WTC11 (cell line): ENCODE measurements at regions of chr20 and their contacts with region 1.

Region 1: GRCh38 chr20:57329608-57330221 is at the start of gene SPO11:
- DNase-seq: peak; percentile 76
- ATAC-seq: peak; percentile 88
- H3K4me3 Mint-ChIP-seq: no peak within 1 kb of the TSS
- H3K27ac Mint-ChIP-seq: no peak within 1 kb of the TSS
- H3K4me1 Mint-ChIP-seq: peaks cover 10% of the 10 kb centered on the region
- H3K27me3 Mint-ChIP-seq: no peaks in the 10 kb centered on the region
- CTCF ChIP-seq: peak; percentile 58
- total RNA-seq, gene SPO11: not detected in 3 replicates

Region 2: DNA sequence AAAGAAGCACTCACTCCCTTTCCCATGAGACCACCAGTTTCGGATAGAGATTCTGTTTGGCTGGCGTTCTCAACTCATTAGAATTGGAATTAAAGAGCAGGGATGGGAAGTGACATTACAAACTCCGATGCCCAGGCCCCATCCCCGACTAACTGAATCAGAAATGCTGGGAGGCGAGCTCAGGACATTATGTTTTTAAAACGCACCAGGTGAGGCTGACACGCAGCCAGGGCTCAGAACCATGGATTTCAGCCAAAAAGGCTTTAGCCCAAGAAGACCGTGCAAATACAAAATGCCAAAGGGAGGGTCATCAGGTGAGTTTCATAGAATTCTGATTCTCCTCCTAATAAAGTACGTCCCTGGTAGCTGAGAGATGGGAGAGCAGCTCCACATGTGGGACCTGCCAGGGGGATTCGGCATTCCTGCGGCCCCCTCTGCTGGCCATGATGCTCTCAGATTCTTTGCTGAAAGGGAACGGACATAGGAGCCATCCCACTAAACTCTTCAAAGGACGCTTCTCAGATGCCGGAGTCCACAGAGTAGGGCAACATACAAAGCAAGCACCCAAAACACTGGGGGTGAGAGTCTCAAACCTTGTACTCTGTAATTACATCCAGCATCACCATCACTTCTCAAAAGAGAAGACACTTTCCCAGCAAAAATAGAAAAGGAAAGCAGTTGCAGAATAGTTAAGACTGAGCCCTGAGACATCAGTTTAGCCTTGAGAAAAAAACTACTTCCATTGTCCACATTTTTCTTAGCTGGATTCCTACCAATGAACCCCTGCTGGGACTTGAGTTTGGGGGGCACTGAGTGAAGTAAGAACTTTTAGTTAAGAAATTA is 268.4 kb before region 1 on chr20:
- CTCF ChIA-PET with region 1: interaction called, 12 read pairs
- POLR2A ChIA-PET with region 1: no interaction called
- DNase-seq: peak; percentile 80
- ATAC-seq: peak; percentile 94
- H3K4me3 Mint-ChIP-seq: no peak overlapping the region
- H3K27ac Mint-ChIP-seq: no peak overlapping the region
- H3K4me1 Mint-ChIP-seq: peaks cover 9% of the 10 kb centered on the region
- H3K27me3 Mint-ChIP-seq: no peaks in the 10 kb centered on the region; the same call in 1 of the 2 replicates
- CTCF ChIP-seq: peak; percentile 22; the same call in 1 of the 2 replicates

Region 3: DNA sequence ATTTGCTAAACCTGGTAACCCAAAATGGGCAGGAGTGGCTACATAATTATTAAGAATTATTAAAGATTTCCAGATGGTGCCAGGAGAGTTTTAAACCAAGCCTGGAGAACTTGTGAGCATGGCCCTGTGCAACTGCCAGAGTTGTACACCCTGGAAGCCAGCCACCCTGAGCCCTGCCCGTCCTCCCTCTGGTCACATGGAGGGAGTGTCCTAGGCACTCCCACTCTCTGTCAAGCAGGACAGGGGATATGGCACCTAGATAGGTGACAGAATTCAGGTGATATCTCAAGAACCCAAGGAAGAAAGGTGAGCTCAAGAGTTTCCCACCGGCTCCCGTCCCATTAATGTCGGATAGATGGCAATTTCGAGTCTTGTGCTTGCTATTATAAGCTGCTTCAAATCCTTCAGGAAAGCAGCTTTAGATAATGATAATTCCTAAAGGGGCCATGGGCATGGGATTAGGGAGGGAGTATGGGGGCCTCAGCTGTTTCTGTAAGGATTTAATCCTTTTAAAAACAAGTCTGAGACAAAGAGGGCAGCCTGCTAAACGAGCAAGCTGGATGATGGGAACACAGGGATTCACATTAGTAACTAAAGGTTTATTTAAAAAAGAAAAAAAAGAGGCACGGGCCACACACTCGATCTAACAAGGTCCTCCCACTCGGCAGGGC is 232.3 kb before region 1 on chr20:
- CTCF ChIA-PET with region 1: interaction called, 239 read pairs
- POLR2A ChIA-PET with region 1: no interaction called
- DNase-seq: no peak
- ATAC-seq: no peak
- H3K4me3 Mint-ChIP-seq: no peak overlapping the region
- H3K27ac Mint-ChIP-seq: no peak overlapping the region
- H3K4me1 Mint-ChIP-seq: peaks cover 1% of the 10 kb centered on the region
- H3K27me3 Mint-ChIP-seq: peaks cover 3% of the 10 kb centered on the region
- CTCF ChIP-seq: no peak

Region 4: GRCh38 chr20:57211959-57212895 is 117.5 kb before region 1 on chr20:
- CTCF ChIA-PET with region 1: interaction called, 11 read pairs
- POLR2A ChIA-PET with region 1: no interaction called
- DNase-seq: peak; percentile 62
- ATAC-seq: peak; percentile 79
- H3K4me3 Mint-ChIP-seq: peak overlapping the region; percentile 10
- H3K27ac Mint-ChIP-seq: peak overlapping the region; percentile 59
- H3K4me1 Mint-ChIP-seq: peaks cover 28% of the 10 kb centered on the region
- H3K27me3 Mint-ChIP-seq: no peaks in the 10 kb centered on the region
- CTCF ChIP-seq: no peak

Region 5: DNA sequence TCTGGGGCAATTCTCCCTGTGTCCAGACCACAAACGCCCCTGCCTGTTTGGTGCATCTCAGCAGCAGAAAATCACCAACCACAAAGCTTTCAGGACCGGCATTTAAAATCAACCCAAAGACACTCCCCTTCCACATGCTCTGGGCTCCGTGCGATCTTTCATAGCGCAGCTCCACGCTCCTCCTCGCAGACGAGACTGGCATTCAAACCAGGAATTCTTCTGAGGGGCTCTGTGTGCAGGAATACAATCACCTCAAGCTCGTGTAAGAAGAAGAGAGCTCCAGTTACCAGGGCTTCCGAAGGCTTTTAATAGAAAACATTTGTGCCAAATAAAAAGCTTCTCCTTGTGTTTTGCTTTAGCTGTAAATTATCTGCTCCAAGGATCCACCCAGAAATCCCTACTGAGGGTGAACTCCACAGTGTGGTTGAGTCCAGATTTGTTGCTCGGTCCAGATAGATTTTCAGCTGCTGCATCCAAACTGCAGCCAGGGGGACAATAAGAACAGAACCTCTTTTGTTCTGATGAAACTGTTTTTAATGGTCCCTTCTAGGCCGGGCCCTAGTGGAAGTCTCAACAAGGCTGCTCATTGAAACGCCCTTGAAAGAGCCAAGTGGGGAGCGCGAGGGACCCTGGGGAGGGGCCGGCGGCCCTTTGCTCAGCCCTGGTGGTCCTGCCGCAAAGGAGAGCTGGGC is 46.9 kb before region 1 on chr20:
- CTCF ChIA-PET with region 1: interaction called, 10 read pairs
- POLR2A ChIA-PET with region 1: no interaction called
- DNase-seq: no peak
- ATAC-seq: no peak; the same call in 1 of the 2 replicates
- H3K4me3 Mint-ChIP-seq: no peak overlapping the region
- H3K27ac Mint-ChIP-seq: no peak overlapping the region
- H3K4me1 Mint-ChIP-seq: peaks cover 26% of the 10 kb centered on the region
- H3K27me3 Mint-ChIP-seq: no peaks in the 10 kb centered on the region; the same call in 1 of the 2 replicates
- CTCF ChIP-seq: no peak

Region 6: GRCh38 chr20:57351042-57351783 is 21.5 kb after region 1 on chr20 and contains the start of gene RAE1:
- CTCF ChIA-PET with region 1: interaction called, 20 read pairs
- POLR2A ChIA-PET with region 1: no interaction called
- DNase-seq: peak; percentile 81
- ATAC-seq: peak; percentile 84
- H3K4me3 Mint-ChIP-seq: peak within 1 kb of the TSS; percentile 87
- H3K27ac Mint-ChIP-seq: peak within 1 kb of the TSS; percentile 16; the same call in 1 of the 2 replicates
- H3K4me1 Mint-ChIP-seq: peaks cover 11% of the 10 kb centered on the region
- H3K27me3 Mint-ChIP-seq: peaks cover 6% of the 10 kb centered on the region
- CTCF ChIP-seq: no peak
- total RNA-seq, gene RAE1: 31.3 to 33.4 TPM (median 31.4 TPM) in 3 replicates

Region 7: DNA sequence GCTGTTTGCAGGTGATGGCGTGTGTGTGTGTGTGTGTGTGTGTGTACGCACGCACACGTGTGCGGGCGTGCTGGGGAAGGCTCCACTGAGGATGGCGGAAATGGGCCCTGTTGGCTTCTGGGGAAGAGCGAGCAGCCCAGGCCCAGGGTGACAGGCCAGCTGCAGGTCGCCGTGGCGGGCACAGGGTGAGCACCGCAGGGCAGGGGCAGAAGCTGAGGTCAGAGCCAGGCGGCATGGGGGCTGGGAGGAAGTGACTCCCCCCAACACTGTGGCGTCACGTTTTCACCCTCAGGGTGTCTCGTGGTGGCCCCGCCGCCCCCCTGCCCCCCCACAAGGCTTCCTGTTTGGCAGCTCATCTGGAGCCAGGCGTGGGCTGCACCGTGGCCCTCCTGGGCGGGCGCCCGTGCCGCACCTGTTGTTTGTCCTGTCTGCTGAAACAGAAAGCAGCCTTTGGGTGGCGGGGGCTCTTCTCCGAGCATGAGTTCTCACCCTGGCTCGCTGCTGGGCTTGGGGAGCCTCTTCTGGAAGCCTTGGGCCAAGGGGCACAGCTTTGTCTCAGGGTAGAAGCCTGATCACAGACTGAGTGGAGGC is 68.6 kb after region 1 on chr20:
- CTCF ChIA-PET with region 1: no interaction called
- POLR2A ChIA-PET with region 1: no interaction called
- DNase-seq: no peak
- ATAC-seq: no peak
- H3K4me3 Mint-ChIP-seq: no peak overlapping the region
- H3K27ac Mint-ChIP-seq: peak overlapping the region; percentile 85
- H3K4me1 Mint-ChIP-seq: peaks cover 25% of the 10 kb centered on the region
- H3K27me3 Mint-ChIP-seq: no peaks in the 10 kb centered on the region
- CTCF ChIP-seq: no peak